Stomach (tissue), 19 donors: ENCODE measurements at regions of chr13 and their contacts with region 1.

Region 1: DNA sequence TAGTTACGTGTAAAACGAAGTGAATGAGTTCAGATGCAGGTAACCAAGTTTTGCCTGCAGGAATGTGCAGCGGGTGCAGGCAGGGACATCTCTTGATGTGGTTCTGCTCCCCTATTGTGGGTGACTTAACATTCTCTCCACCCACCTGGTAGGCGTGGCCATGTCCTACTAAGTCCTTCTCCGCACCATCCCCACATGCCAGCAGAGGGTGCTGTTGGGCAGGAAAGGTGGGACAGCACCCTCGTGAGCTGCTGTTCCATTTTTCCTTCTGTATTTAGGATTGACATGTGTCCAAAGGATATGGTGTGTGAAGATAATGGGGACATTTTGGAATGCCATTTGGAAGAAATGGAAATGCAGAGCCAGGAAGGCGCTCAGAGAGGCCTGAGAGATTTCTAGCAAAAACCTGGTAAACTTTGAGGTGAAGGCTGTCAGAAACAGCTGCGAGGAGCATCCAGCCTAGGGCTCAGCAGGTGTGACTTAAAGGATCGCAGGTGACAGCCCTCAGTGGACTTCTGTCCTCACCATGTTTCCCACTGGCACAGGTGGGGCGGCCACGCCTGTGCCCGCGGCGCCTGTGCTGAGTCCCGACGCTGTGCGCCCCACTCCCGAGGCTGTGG is 26.2 kb upstream of the MCF2L start:
- DNase-seq: peak; percentile 98 to 99
- H3K4me3 ChIP-seq: peak overlapping the region; percentile 52 to 69 (median 58)
- H3K27ac ChIP-seq: peak overlapping the region in 4 of 5 donors; percentile 24 to 77 (median 69)
- H3K4me1 ChIP-seq: peaks cover 0 to 20% (median 16%) of the 10 kb centered on the region in 4 donors
- H3K27me3 ChIP-seq: peaks cover 0 to 31% (median 9%) of the 10 kb centered on the region in 3 donors
- CTCF ChIP-seq: peak in 5 of 7 experiments; percentile 82 to 98 (median 92)
- EP300 ChIP-seq: no peak
- POLR2A ChIP-seq: no peak

Region 2: DNA sequence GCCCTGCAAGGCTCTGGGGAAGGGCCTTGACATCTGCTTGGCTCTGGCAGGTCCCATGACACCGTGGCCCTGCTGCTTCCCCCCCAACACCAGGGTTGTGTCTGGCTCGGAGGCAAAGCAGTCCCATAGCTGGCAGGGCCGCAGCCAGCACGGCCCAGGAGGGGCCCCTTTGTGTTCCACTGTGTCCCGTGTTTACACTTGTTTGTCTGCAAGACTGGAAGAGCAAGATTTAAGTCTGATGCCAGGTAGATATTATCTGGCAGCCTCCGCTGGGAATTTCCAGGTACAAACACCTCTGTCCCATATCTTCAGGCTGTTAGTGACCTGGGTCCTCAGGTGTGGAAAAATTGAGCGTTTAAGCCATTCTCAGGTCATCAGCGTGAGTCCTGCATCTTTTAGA is 70.5 kb after region 1 on chr13:
- intact Hi-C with region 1: no loop called
- DNase-seq: peak; percentile 71 to 72
- H3K4me3 ChIP-seq: no peak overlapping the region
- H3K27ac ChIP-seq: peak overlapping the region in 3 of 5 donors; percentile 9 to 66 (median 26)
- H3K4me1 ChIP-seq: peaks cover 17 to 34% (median 24%) of the 10 kb centered on the region in 4 donors
- H3K27me3 ChIP-seq: no peaks in the 10 kb centered on the region
- CTCF ChIP-seq: no peak
- EP300 ChIP-seq: no peak
- POLR2A ChIP-seq: no peak

Region 3: GRCh38 chr13:113029487-113030258 is 86.9 kb after region 1 on chr13:
- intact Hi-C with region 1: loop called (anchors 5 kb)
- DNase-seq: peak; percentile 53 to 71
- H3K4me3 ChIP-seq: no peak overlapping the region
- H3K27ac ChIP-seq: no peak overlapping the region
- H3K4me1 ChIP-seq: peaks cover 0 to 2% (median under 1%) of the 10 kb centered on the region in 4 donors
- H3K27me3 ChIP-seq: peaks cover 0 to 21% (median 0%) of the 10 kb centered on the region in 3 donors
- CTCF ChIP-seq: peak in 5 of 7 experiments; percentile 68 to 83 (median 73)
- EP300 ChIP-seq: no peak
- POLR2A ChIP-seq: no peak

Region 4: GRCh38 chr13:113169277-113170272 is 226.8 kb after region 1 on chr13:
- intact Hi-C with region 1: no loop called
- DNase-seq: peak in 1 of 2 donors; percentile 59
- H3K4me3 ChIP-seq: no peak overlapping the region
- H3K27ac ChIP-seq: peak overlapping the region in 3 of 5 donors; percentile 29 to 42 (median 30)
- H3K4me1 ChIP-seq: peaks cover 12 to 29% (median 19%) of the 10 kb centered on the region in 4 donors
- H3K27me3 ChIP-seq: peaks cover 0 to under 1% (median 0%) of the 10 kb centered on the region in 3 donors
- CTCF ChIP-seq: no peak
- EP300 ChIP-seq: no peak
- POLR2A ChIP-seq: no peak

Region 5: GRCh38 chr13:113205428-113205931 is 262.7 kb after region 1 on chr13:
- intact Hi-C with region 1: no loop called
- DNase-seq: no peak
- H3K4me3 ChIP-seq: no peak overlapping the region
- H3K27ac ChIP-seq: no peak overlapping the region
- H3K4me1 ChIP-seq: peaks cover 38 to 73% (median 60%) of the 10 kb centered on the region in 4 donors
- H3K27me3 ChIP-seq: no peaks in the 10 kb centered on the region
- CTCF ChIP-seq: no peak
- EP300 ChIP-seq: no peak
- POLR2A ChIP-seq: no peak

Region 6: GRCh38 chr13:113393563-113394338 is 451.0 kb after region 1 on chr13:
- intact Hi-C with region 1: loop called (anchors 10 kb)
- DNase-seq: peak; percentile 88 to 94
- H3K4me3 ChIP-seq: peak overlapping the region; percentile 63 to 82 (median 78)
- H3K27ac ChIP-seq: peak overlapping the region in 4 of 5 donors; percentile 57 to 76 (median 70)
- H3K4me1 ChIP-seq: peaks cover 4 to 30% (median 18%) of the 10 kb centered on the region in 4 donors
- H3K27me3 ChIP-seq: no peaks in the 10 kb centered on the region
- CTCF ChIP-seq: peak in 4 of 7 experiments; percentile 21 to 98 (median 92)
- EP300 ChIP-seq: no peak
- POLR2A ChIP-seq: no peak